ENCODE measurements at regions of chr9 and their contacts with region 1.

Region 1: GRCh38 chr9:97386733-97387503 is 25.0 kb upstream of the TDRD7 start:
- DNase-seq: peak; percentile 79
- H3K4me3 Mint-ChIP-seq: no peak overlapping the region
- H3K27ac Mint-ChIP-seq: no peak overlapping the region
- H3K4me1 Mint-ChIP-seq: peaks cover 16% of the 10 kb centered on the region
- H3K27me3 Mint-ChIP-seq: peaks cover 44% of the 10 kb centered on the region

Region 2: DNA sequence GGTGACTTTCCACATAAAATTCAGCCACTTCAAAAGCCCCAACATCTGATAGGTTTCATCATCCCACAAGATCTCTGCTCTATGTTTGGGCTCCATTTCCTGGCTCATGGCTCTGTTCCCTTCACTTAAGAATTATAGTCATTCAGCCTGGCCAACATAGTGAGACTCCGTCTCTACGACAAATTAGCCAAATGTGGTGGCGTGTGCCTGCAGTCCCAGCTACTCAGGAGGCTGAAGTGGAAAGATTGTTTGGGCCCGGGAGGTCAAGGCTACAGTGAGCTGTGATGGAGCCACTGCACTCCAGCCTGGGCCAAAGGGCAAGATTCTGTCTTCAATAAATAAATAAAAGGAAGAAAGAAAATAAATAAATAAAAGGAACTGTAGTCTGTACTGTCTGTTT is 290.1 kb before region 1 on chr9:
- CTCF ChIA-PET with region 1: no interaction called
- DNase-seq: no peak
- H3K4me3 Mint-ChIP-seq: no peak overlapping the region
- H3K27ac Mint-ChIP-seq: no peak overlapping the region
- H3K4me1 Mint-ChIP-seq: no peaks in the 10 kb centered on the region
- H3K27me3 Mint-ChIP-seq: peaks cover 7% of the 10 kb centered on the region

Region 3: DNA sequence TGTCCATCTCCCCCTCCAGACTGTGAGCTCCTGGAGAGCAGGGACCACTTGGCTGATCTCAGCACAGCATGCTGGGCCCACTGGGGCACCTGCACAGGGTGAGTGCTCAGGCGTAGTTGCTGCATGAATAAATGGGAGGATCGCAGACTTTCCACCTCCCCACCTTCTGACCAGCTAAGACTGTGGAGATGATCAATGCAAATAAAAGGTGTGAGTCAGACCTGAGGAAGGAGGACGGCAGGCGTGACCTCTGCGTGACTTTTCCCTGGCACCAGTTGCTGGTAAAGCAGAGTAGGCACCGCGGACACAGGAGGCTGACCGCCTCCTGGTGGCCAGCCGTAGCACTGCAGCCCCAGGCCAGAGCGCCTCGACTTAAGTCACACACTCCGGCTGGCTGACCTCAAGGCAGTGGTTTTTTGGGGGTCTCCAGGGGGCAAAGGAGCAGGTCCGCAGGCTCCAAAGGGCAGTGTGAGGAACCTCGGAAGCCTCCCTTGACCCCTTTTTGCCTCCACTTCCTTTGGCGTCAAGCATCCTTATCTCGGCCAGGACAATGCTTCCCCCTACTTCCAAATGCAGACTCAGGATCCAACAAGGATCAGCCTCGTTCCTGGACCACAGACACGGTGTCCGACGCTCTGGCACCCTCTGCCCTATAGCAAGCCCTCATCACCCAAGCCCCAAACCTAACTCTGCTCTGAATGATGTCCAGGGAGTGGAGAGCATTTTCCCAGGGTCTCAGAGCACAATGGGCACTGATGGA is 12.3 kb after region 1 on chr9:
- CTCF ChIA-PET with region 1: interaction called, 56 read pairs
- DNase-seq: peak; percentile 72
- H3K4me3 Mint-ChIP-seq: no peak overlapping the region
- H3K27ac Mint-ChIP-seq: no peak overlapping the region
- H3K4me1 Mint-ChIP-seq: peaks cover 17% of the 10 kb centered on the region
- H3K27me3 Mint-ChIP-seq: peaks cover 51% of the 10 kb centered on the region

Region 4: DNA sequence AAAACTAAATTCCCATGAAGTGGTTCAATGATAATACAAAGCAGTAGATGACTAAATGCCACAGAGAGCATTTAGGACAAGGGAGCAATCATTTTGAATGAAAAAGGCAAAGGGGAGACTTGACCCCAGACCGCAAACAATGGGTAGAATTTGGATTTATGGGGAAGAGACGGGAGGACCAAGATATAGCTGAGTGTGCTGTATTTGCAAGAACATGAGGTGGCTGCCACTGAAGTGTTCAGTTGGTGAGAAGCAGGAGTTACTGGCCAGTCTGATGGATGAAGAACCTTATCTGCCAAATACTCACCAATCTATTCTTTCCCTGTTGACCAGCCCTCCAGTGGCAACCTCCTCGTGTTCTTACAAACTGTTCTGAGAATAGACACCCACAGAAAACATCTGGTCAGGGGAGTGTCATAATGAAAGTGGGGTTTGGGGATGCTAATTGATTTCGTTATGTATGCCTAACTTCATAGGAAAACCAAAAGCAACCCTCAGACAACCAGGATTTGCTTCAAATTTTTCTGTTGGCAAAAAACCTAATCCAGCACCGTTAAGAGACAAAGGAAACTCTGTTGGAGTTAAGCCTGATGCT is 44.7 kb after region 1 on chr9:
- CTCF ChIA-PET with region 1: no interaction called
- DNase-seq: no peak
- H3K4me3 Mint-ChIP-seq: no peak overlapping the region
- H3K27ac Mint-ChIP-seq: no peak overlapping the region
- H3K4me1 Mint-ChIP-seq: peaks cover 2% of the 10 kb centered on the region
- H3K27me3 Mint-ChIP-seq: no peaks in the 10 kb centered on the region

Measured in activated naive CD4-positive, alpha-beta T cell treated with anti-CD3 and anti-CD28 coated beads, Interleukin-2, amount 10 ng/mL, durations not matched to agents 7 days and 5 days (primary cell).